A673 (cell line): ENCODE measurements at regions of chr13 and their contacts with region 1.

Region 1: DNA sequence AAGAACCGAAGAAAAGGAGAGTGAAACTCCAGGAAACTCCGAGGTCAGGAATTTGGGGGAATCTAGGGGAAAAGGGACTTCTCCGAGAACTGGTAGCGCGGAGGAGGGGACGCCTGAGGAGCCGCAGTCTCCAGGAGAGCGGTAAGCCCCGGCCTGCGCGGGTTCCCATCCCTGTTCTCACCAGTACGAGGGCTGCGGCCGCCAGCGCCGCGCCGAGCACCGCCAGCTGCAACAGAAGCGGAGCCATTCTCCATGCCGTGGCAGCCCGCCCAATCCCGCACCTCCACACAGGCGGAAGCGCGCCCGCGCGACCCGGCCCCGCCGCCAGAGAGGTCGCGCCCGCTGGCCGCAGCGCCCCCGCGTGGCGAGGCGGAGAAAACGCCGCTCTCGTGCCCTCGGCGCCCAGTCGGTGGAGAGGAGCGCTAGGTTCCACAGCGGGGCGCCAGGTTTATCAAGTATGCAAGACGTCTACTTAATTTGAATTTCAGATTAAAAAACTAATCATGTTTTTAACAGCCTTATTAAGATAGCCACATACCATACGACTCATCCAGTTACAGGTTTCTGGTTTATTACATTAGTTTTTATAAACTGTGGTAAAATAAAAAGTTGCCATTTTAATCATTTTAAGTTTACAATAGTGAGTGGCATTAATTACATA is at the start of gene ALG5:
- DNase-seq: peak; percentile 95
- H3K4me3 ChIP-seq: peak within 1 kb of the TSS; percentile 69
- H3K27ac ChIP-seq: peak within 1 kb of the TSS; percentile 99
- H3K4me1 ChIP-seq: peaks cover 21% of the 10 kb centered on the region
- H3K27me3 ChIP-seq: no peaks in the 10 kb centered on the region
- CTCF ChIP-seq: peak; percentile 78
- total RNA-seq, gene ALG5: 45.4 and 52.0 TPM in 2 replicates

Region 2: DNA sequence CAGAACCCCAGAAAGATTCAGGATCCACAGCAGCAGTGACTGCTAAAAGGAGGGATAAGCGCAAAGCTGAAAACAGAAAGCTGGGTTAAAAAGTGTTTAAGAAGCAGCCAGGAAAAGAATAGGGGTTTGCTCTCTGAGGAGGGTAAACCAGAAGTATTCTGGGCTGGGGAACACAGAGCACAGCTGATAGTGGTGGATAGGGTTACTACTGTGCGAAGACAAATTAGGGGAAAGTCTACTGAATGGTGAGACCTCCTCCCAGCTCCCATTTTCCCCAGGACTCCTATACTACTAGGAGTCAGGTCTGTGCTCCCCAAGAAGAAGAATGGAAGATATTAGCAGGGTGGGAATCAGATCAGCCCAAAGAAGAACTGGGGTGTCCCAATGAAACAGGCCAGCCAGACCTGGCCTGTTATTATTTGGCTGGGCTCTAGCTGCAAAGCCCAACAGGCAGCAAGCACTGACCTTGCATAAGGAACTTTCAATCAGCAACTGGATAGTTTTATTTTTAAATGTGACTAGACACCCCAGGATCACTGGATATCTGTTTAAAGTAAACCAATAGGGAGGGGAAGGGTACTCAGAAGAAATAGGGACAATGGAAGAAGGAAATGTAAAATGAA is 368.9 kb before region 1 on chr13:
- CTCF ChIA-PET with region 1: no interaction called
- POLR2A ChIA-PET with region 1: interaction called, 19 read pairs
- intact Hi-C with region 1: no loop called
- DNase-seq: no peak
- H3K4me3 ChIP-seq: no peak overlapping the region
- H3K27ac ChIP-seq: no peak overlapping the region
- H3K4me1 ChIP-seq: peaks cover 4% of the 10 kb centered on the region
- H3K27me3 ChIP-seq: no peaks in the 10 kb centered on the region
- CTCF ChIP-seq: no peak

Region 3: DNA sequence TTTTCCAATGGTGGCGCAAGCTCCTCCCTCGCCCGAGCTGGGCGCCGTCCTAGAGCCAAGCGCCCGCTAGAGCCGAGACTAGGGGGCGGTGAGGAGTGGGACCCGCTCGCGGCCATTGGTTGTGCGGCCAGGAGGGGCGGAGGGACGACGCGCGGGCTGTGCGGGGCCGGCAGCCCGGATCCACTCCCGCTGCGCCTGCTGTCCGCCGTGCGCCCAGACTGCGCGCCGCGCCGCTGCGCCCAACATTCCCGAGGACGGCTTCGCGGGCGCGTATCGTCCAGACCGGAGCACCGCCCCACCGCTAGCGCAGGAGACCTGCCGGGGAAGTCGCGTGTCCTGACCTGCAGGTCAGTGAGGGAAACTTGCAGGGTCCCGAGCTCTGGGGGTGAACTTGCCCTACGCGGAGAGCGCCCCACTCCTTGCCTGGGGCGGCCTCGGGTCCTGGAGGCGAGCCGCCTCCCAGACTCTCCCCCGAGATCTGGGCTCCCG is 325.3 kb before region 1 on chr13 and contains the start of gene SERTM1:
- CTCF ChIA-PET with region 1: no interaction called
- POLR2A ChIA-PET with region 1: no interaction called
- intact Hi-C with region 1: loop called (anchors 10 kb)
- DNase-seq: peak; percentile 93
- H3K4me3 ChIP-seq: peak within 1 kb of the TSS; percentile 66
- H3K27ac ChIP-seq: peak within 1 kb of the TSS; percentile 75
- H3K4me1 ChIP-seq: peaks cover 15% of the 10 kb centered on the region
- H3K27me3 ChIP-seq: no peaks in the 10 kb centered on the region
- CTCF ChIP-seq: no peak
- total RNA-seq, gene SERTM1: 42.9 and 53.5 TPM in 2 replicates

Region 4: GRCh38 chr13:37011002-37011401 is 11.8 kb after region 1 on chr13:
- CTCF ChIA-PET with region 1: no interaction called
- POLR2A ChIA-PET with region 1: interaction called, 19 read pairs
- intact Hi-C with region 1: no loop called
- DNase-seq: no peak
- H3K4me3 ChIP-seq: no peak overlapping the region
- H3K27ac ChIP-seq: peak overlapping the region; percentile 52
- H3K4me1 ChIP-seq: peaks cover 37% of the 10 kb centered on the region
- H3K27me3 ChIP-seq: no peaks in the 10 kb centered on the region
- CTCF ChIP-seq: no peak

Region 5: DNA sequence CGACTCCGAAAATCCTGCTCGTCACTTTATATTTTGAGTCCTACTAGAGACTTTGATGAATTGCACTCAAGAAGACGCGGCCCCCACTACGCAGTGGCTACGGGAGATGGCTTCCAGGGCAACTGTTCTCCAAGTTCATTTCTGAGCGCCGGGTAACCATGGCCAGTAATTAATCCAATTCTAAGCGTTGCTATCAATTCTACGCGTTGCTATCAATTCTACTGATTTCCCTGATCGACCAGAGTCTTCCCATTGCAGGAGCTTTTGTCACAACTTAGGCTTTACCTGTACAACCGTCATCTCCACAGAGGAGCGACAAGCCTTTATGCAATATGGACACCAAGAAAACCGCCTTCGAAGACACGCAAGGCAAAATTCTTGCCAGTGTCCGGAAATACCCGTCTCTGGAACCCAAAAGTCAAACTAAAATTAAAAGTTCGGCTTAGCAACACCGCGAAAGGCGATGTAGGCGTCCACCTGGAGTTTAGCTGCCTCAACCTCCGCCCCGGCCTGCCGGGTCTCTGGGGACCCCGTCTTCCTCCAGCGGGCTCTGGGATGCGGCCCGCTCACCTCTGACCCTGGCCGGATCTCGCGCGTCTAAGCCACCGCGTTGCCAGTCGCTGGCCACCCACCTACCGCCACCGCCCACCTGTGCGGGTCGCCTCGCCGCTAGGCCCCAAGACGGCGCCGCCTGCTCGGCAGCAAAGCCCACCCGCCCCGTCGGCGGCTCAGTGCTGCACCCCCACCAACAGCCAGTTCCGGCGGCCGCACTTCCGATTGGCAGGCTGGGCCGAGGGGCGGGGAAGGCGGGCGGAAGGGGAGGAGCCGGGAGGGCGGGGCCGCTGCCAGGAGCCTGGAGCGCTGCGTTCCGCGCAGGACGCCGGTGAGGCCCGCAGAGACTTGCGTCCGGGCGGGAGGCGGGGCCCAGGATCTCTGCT is 60.0 kb after region 1 on chr13 and contains the start of gene SUPT20H:
- CTCF ChIA-PET with region 1: no interaction called
- POLR2A ChIA-PET with region 1: no interaction called
- intact Hi-C with region 1: loop called (anchors 10 kb)
- DNase-seq: peak; percentile 98
- H3K4me3 ChIP-seq: peak within 1 kb of the TSS; percentile 79
- H3K27ac ChIP-seq: peak within 1 kb of the TSS; percentile 90
- H3K4me1 ChIP-seq: no peaks in the 10 kb centered on the region
- H3K27me3 ChIP-seq: no peaks in the 10 kb centered on the region
- CTCF ChIP-seq: no peak
- total RNA-seq, gene SUPT20H: 82.6 and 94.4 TPM in 2 replicates

Region 6: DNA sequence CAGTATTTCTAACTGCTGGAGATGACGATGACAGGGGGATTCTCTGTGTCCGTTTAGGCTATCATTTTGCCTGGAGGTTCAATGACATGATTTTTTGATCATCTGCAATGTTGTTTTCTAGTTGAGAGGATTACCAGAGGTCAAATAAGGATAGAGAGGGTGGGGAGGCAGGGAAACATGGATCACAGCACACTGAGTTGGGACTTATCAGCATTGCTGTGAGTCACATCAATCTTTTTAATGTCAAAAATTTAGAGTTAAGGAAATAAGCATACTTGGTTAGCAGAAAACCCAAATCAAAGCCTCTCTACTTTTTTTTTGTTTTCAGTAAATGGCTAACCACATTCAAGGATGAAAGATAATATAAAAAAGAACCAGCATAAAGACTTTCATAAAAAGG is 149.3 kb after region 1 on chr13:
- CTCF ChIA-PET with region 1: no interaction called
- POLR2A ChIA-PET with region 1: no interaction called
- intact Hi-C with region 1: no loop called
- DNase-seq: no peak
- H3K4me3 ChIP-seq: no peak overlapping the region
- H3K27ac ChIP-seq: no peak overlapping the region
- H3K4me1 ChIP-seq: no peaks in the 10 kb centered on the region
- H3K27me3 ChIP-seq: no peaks in the 10 kb centered on the region
- CTCF ChIP-seq: no peak

Region 7: DNA sequence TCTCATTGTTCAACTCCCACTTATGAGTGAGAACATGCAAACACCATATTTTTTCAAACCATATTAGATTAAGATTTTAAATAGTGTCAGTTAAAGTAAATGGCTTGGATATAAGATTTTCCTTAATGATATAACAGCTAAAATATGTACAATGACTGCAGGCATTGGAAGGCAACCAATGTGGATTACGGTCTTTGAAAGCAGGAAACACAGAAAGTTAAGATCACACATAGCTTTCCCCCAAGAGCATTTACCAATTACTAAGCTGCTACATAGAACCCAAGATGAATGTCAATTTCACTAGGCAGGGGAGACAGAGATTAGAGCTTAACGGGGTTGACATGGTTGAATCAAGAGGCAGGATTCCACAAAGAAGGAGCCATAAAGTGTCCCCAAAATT is 1043.6 kb after region 1 on chr13:
- CTCF ChIA-PET with region 1: no interaction called
- POLR2A ChIA-PET with region 1: no interaction called
- intact Hi-C with region 1: no loop called
- DNase-seq: peak; percentile 55
- H3K4me3 ChIP-seq: no peak overlapping the region
- H3K27ac ChIP-seq: peak overlapping the region; percentile 3
- H3K4me1 ChIP-seq: peaks cover 9% of the 10 kb centered on the region
- H3K27me3 ChIP-seq: no peaks in the 10 kb centered on the region
- CTCF ChIP-seq: no peak